ENCODE measurements at regions of chr16 and their contacts with region 1.

Region 1: DNA sequence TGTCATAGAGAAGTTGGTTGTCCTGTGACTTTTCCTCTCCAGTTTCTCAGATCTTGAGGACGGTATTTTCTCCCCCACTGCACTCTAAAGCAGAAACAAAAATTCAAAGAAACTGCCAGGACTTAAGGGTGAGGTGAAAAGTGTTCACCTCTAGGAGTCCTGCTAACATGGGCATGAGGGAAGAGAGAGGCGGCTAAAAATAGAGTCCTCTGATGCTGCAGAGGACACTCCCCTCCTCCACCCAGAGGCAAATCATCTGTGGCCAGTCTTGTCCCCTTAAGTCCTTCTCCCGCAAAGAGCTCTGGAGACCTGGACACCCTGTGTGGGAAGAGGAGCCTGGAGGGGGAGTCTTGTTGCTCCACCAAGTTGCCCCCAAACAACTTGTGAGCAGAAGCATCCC is 4.7 kb upstream of the DDX19A start:
- DNase-seq: no peak
- H3K4me3 Mint-ChIP-seq: no peak overlapping the region
- H3K27ac Mint-ChIP-seq: peak overlapping the region; percentile 11
- H3K4me1 Mint-ChIP-seq: peaks cover 7% of the 10 kb centered on the region
- H3K27me3 Mint-ChIP-seq: no peaks in the 10 kb centered on the region

Region 2: GRCh38 chr16:70289229-70290098 is 52.6 kb before region 1 on chr16 and contains the start of gene AARS1:
- CTCF ChIA-PET with region 1: no interaction called
- POLR2A ChIA-PET with region 1: interaction called, 30 read pairs
- intact Hi-C with region 1: loop called (anchors 1 kb)
- DNase-seq: peak; percentile 97
- H3K4me3 Mint-ChIP-seq: peak within 1 kb of the TSS; percentile 98
- H3K27ac Mint-ChIP-seq: peak within 1 kb of the TSS; percentile 98
- H3K4me1 Mint-ChIP-seq: peaks cover 31% of the 10 kb centered on the region
- H3K27me3 Mint-ChIP-seq: peaks cover 2% of the 10 kb centered on the region
- total RNA-seq, gene AARS1: 165 to 170 TPM

Region 3: GRCh38 chr16:70298988-70299938 is 42.8 kb before region 1 on chr16 and contains the start of gene DDX19B:
- CTCF ChIA-PET with region 1: interaction called, 3 read pairs
- POLR2A ChIA-PET with region 1: interaction called, 20 read pairs
- intact Hi-C with region 1: loop called (anchors 1 kb)
- DNase-seq: peak; percentile 81
- H3K4me3 Mint-ChIP-seq: peak within 1 kb of the TSS; percentile 91
- H3K27ac Mint-ChIP-seq: peak within 1 kb of the TSS; percentile 91
- H3K4me1 Mint-ChIP-seq: peaks cover 36% of the 10 kb centered on the region
- H3K27me3 Mint-ChIP-seq: no peaks in the 10 kb centered on the region
- total RNA-seq, gene DDX19B: 31.2 to 36.6 TPM

Measured in activated CD4-positive, alpha-beta memory T cell treated with anti-CD3 and anti-CD28 coated beads for 36 hours (primary cell).